ENCODE measurements at regions of chr20 and their contacts with region 1.

Region 1: GRCh38 chr20:44012466-44013226 is 98.0 kb downstream of the TOX2 start:
- DNase-seq: no peak
- ATAC-seq: no peak
- H3K4me3 ChIP-seq: no peak overlapping the region
- H3K4me3 Mint-ChIP-seq: no peak overlapping the region
- H3K27ac ChIP-seq: no peak overlapping the region
- H3K27ac Mint-ChIP-seq: no peak overlapping the region
- H3K4me1 ChIP-seq: no peaks in the 10 kb centered on the region
- H3K4me1 Mint-ChIP-seq: peaks cover 3% of the 10 kb centered on the region
- H3K27me3 ChIP-seq: peaks cover 0 to 7% (median 0%) of the 10 kb centered on the region in 4 experiments
- H3K27me3 Mint-ChIP-seq: no peaks in the 10 kb centered on the region
- CTCF ChIP-seq: no peak

Region 2: DNA sequence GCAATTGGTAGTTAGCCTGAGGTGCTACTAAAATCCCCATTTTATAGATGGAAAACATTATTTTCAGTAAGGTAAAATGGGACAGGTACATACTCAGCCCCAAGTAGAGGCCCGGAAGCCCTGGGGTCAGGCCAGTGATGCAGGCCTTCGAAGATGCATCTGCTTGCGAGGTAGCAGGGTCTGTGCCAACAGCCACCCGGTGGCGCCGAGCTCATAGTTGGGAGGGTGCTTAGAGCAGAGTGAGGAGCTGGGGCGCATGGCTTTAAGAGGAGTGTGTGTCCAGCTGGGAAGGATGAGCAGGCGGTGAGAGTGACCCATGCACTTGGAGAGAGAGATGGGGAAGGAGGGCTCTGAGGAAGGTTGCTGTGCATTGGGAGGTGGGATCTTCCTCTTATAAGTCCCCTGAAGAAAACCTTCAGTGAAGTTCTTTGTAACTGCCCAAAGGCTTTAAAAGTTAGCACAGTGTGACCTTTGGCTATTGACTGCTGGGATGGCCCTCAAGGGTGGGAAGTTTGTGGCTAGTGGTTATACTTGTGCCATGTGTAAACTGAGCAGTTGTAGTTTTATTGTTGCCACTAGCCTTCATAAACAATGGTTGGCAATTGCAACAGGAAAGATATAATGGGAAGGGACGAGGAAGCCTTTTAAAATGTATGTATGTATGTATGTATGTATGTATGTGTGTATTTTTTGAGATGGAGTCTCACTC is 26.9 kb before region 1 on chr20:
- CTCF ChIA-PET with region 1: no interaction called
- POLR2A ChIA-PET with region 1: no interaction called
- intact Hi-C with region 1: loop called (anchors 1 kb)
- DNase-seq: no peak
- ATAC-seq: no peak
- H3K4me3 ChIP-seq: no peak overlapping the region
- H3K4me3 Mint-ChIP-seq: no peak overlapping the region
- H3K27ac ChIP-seq: no peak overlapping the region
- H3K27ac Mint-ChIP-seq: no peak overlapping the region
- H3K4me1 ChIP-seq: no peaks in the 10 kb centered on the region
- H3K4me1 Mint-ChIP-seq: no peaks in the 10 kb centered on the region
- H3K27me3 ChIP-seq: no peaks in the 10 kb centered on the region
- H3K27me3 Mint-ChIP-seq: no peaks in the 10 kb centered on the region
- CTCF ChIP-seq: no peak

Region 3: GRCh38 chr20:44056010-44056698 is 43.5 kb after region 1 on chr20:
- CTCF ChIA-PET with region 1: no interaction called
- POLR2A ChIA-PET with region 1: no interaction called
- intact Hi-C with region 1: no loop called
- DNase-seq: no peak
- ATAC-seq: peak; percentile 41
- H3K4me3 ChIP-seq: no peak overlapping the region
- H3K4me3 Mint-ChIP-seq: no peak overlapping the region
- H3K27ac ChIP-seq: no peak overlapping the region
- H3K27ac Mint-ChIP-seq: no peak overlapping the region
- H3K4me1 ChIP-seq: no peaks in the 10 kb centered on the region
- H3K4me1 Mint-ChIP-seq: no peaks in the 10 kb centered on the region
- H3K27me3 ChIP-seq: no peaks in the 10 kb centered on the region
- H3K27me3 Mint-ChIP-seq: peaks cover 8% of the 10 kb centered on the region
- CTCF ChIP-seq: no peak

Region 4: GRCh38 chr20:44342248-44342647 is 329.6 kb after region 1 on chr20:
- CTCF ChIA-PET with region 1: no interaction called
- POLR2A ChIA-PET with region 1: no interaction called
- intact Hi-C with region 1: no loop called
- DNase-seq: no peak
- ATAC-seq: no peak
- H3K4me3 ChIP-seq: no peak overlapping the region
- H3K4me3 Mint-ChIP-seq: no peak overlapping the region
- H3K27ac ChIP-seq: no peak overlapping the region
- H3K27ac Mint-ChIP-seq: no peak overlapping the region
- H3K4me1 ChIP-seq: no peaks in the 10 kb centered on the region
- H3K4me1 Mint-ChIP-seq: no peaks in the 10 kb centered on the region
- H3K27me3 ChIP-seq: no peaks in the 10 kb centered on the region
- H3K27me3 Mint-ChIP-seq: peaks cover 20% of the 10 kb centered on the region
- CTCF ChIP-seq: no peak